Mammary epithelial cell (primary cell): ENCODE measurements at regions of chr6 and their contacts with region 1.

Region 1: GRCh38 chr6:42766141-42766670 is 15.6 kb upstream of the BICRAL start:
- DNase-seq: peak; percentile 76
- H3K4me3 ChIP-seq: no peak overlapping the region
- H3K27ac ChIP-seq: no peak overlapping the region
- H3K4me1 ChIP-seq: no peaks in the 10 kb centered on the region
- H3K27me3 ChIP-seq: no peaks in the 10 kb centered on the region
- CTCF ChIP-seq: no peak

Region 2: GRCh38 chr6:42864602-42865001 is 98.4 kb after region 1 on chr6:
- CTCF ChIA-PET with region 1: no interaction called
- dilution Hi-C with region 1: loop called (anchors 5 kb)
- in situ Hi-C with region 1: no loop called
- intact Hi-C with region 1: no loop called
- DNase-seq: no peak
- H3K4me3 ChIP-seq: no peak overlapping the region
- H3K27ac ChIP-seq: no peak overlapping the region
- H3K4me1 ChIP-seq: no peaks in the 10 kb centered on the region
- H3K27me3 ChIP-seq: no peaks in the 10 kb centered on the region
- CTCF ChIP-seq: no peak

Region 3: DNA sequence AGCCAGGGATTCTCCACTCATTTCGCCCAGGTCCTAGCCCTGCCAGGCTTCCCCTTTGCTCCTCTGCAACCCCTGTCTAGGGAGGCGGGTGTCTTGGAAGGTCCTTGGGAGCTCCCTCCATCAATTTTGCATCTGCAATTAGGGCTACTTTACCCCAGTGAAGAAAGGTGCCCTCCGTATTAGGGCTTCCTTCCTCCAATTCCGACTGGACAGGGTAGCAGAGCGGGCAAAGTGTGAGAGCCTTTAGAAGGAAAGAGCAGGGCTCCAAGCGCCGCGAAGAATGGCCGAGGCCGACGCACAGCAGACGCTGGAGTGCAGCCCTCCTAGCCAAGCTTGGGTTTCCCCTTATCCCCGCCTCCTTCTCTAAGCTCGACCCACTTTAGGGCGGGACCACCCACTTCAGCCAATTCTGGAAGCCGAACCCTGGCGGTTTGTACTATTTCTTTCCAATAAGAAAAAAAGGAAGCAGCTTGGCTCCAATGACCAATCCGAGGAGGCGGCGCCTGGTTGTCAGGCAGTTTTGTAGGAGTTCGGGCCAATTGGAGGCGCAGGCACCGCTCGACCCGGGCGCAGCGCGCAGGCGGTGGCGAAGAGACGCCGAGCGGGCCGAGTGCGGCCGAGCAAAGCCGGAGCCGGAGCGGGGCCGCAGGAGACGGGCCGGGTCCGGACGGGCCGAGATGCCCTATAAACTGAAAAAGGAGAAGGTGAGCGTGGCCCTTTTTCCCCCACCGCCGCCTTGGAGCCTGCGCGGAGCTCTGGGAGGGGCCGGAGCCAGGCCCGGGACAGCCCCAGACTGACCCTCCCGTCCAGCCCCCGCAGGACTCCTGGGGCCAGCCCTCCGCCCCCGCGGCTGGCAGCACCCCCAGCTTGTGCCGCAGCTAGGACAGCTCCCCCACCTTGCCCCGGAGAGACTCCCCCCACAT is 218.1 kb after region 1 on chr6 and contains the start of gene PPP2R5D:
- CTCF ChIA-PET with region 1: no interaction called
- dilution Hi-C with region 1: no loop called
- in situ Hi-C with region 1: no loop called
- intact Hi-C with region 1: no loop called
- DNase-seq: peak; percentile 99
- H3K4me3 ChIP-seq: peak within 1 kb of the TSS; percentile 79 to 82 (median 81)
- H3K27ac ChIP-seq: peak within 1 kb of the TSS; percentile 29
- H3K4me1 ChIP-seq: peaks cover 28% of the 10 kb centered on the region
- H3K27me3 ChIP-seq: no peaks in the 10 kb centered on the region
- CTCF ChIP-seq: no peak
- total RNA-seq, gene PPP2R5D: 32.2 to 35.6 TPM